Heart right ventricle (tissue), 16 donors: ENCODE measurements at regions of chr5 and their contacts with region 1.

Region 1: GRCh38 chr5:95730730-95731570 is at the start of gene RHOBTB3:
- DNase-seq: peak; percentile 90 to 91
- ATAC-seq: peak; percentile 74 to 88 (median 78)
- H3K4me3 ChIP-seq: peak within 1 kb of the TSS; percentile 56 to 84 (median 78)
- H3K27ac ChIP-seq: peak within 1 kb of the TSS; percentile 79 to 98 (median 93)
- H3K4me1 ChIP-seq: peaks cover 0 to 75% (median 48%) of the 10 kb centered on the region in 9 donors
- H3K27me3 ChIP-seq: peaks cover 0 to 9% (median 0%) of the 10 kb centered on the region in 7 donors
- CTCF ChIP-seq: peak in 1 of 9 donors; percentile 25
- total RNA-seq, gene RHOBTB3: 73.1 to 124 (median 94.4) TPM

Region 2: GRCh38 chr5:95773335-95774059 is 42.5 kb after region 1 on chr5:
- intact Hi-C with region 1: loop called in 1 of 10 experiments (anchors 5 kb)
- DNase-seq: no peak
- ATAC-seq: peak in 4 of 8 donors; percentile 10 to 49 (median 33)
- H3K4me3 ChIP-seq: no peak overlapping the region
- H3K27ac ChIP-seq: peak overlapping the region in 1 of 10 donors; percentile 62
- H3K4me1 ChIP-seq: peaks cover 0 to 33% (median 23%) of the 10 kb centered on the region in 9 donors
- H3K27me3 ChIP-seq: no peaks in the 10 kb centered on the region
- CTCF ChIP-seq: no peak